HEK293 (cell line): ENCODE measurements at regions of chr3 and their contacts with region 1.

Region 1: GRCh38 chr3:132029182-132029902 is 5.5 kb downstream of the CPNE4 start:
- H3K4me3 ChIP-seq: no peak overlapping the region
- H3K27ac ChIP-seq: no peak overlapping the region
- H3K4me1 ChIP-seq: no peaks in the 10 kb centered on the region; the same call in 1 of the 2 replicates
- CTCF ChIP-seq: peak; percentile 64

Region 2: GRCh38 chr3:131794766-131795388 is 234.5 kb before region 1 on chr3:
- CTCF ChIA-PET with region 1: interaction called, 32 read pairs
- POLR2A ChIA-PET with region 1: interaction called, 5 read pairs
- H3K4me3 ChIP-seq: no peak overlapping the region
- H3K27ac ChIP-seq: no peak overlapping the region; the same call in 1 of the 2 replicates
- H3K4me1 ChIP-seq: peaks cover 4% of the 10 kb centered on the region
- CTCF ChIP-seq: peak; percentile 70

Region 3: GRCh38 chr3:131960324-131960723 is 69.0 kb before region 1 on chr3:
- CTCF ChIA-PET with region 1: no interaction called
- POLR2A ChIA-PET with region 1: no interaction called
- H3K4me3 ChIP-seq: no peak overlapping the region
- H3K27ac ChIP-seq: no peak overlapping the region
- H3K4me1 ChIP-seq: no peaks in the 10 kb centered on the region
- CTCF ChIP-seq: no peak